ENCODE measurements at regions of chr9 and their contacts with region 1.

Region 1: GRCh38 chr9:33473643-33474352 is at the start of gene NOL6:
- DNase-seq: peak; percentile 98
- total RNA-seq, gene NOL6: 16.7 TPM

Region 2: DNA sequence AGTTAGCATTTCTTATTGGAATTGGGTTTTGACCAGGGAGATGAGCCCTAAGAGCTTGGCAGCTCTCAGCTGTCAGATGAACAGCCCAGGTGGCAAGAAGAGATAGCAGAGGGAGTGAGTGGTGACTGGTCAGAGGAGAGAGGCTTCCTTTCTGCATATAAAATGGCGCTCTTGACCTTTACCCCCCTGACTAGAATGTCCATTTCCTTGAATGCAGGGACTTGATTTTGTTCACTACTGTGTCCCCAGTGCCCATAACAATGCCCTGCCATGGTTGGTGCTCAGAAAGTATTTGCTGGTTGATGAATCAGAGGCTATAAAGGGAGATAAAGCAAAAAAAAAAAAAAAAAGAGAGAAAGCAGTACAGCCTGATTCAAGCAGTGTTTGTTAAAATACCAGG is 201.7 kb before region 1 on chr9:
- intact Hi-C with region 1: no loop called
- DNase-seq: no peak

Region 3: GRCh38 chr9:33287087-33287490 is 186.7 kb before region 1 on chr9:
- intact Hi-C with region 1: loop called (anchors 10 kb)
- DNase-seq: no peak

Region 4: GRCh38 chr9:33426843-33427293 is 46.9 kb before region 1 on chr9:
- intact Hi-C with region 1: no loop called
- DNase-seq: no peak

Region 5: GRCh38 chr9:33510264-33511183 is 36.7 kb after region 1 on chr9:
- intact Hi-C with region 1: loop called (anchors 2 kb)
- DNase-seq: peak; percentile 87